HCT116 (cell line): ENCODE measurements at regions of chr1 and their contacts with region 1.

Region 1: GRCh38 chr1:61332196-61332753 is 249.9 kb downstream of the NFIA start:
- DNase-seq: no peak
- ATAC-seq: no peak
- H3K4me3 ChIP-seq: no peak overlapping the region
- H3K27ac ChIP-seq: no peak overlapping the region
- H3K4me1 ChIP-seq: peaks cover 1 to 4% of the 10 kb centered on the region in 2 experiments; a peak in 2 of 4 replicates
- H3K27me3 ChIP-seq: no peaks in the 10 kb centered on the region
- CTCF ChIP-seq: no peak
- POLR2A ChIP-seq: no peak
- RAD21 ChIP-seq: no peak

Region 2: GRCh38 chr1:60848583-60849188 is 483.6 kb before region 1 on chr1:
- CTCF ChIA-PET with region 1: no interaction called
- POLR2A ChIA-PET with region 1: no interaction called
- RAD21 ChIA-PET with region 1: no interaction called
- intact Hi-C with region 1: loop called (anchors 5 kb)
- DNase-seq: peak; percentile 54
- ATAC-seq: peak; percentile 69
- H3K4me3 ChIP-seq: no peak overlapping the region
- H3K27ac ChIP-seq: no peak overlapping the region
- H3K4me1 ChIP-seq: no peaks in the 10 kb centered on the region
- H3K27me3 ChIP-seq: no peaks in the 10 kb centered on the region
- CTCF ChIP-seq: peak; percentile 51 to 69 (median 60); a peak in 4 of 6 replicates
- POLR2A ChIP-seq: no peak
- RAD21 ChIP-seq: peak; percentile 74

Region 3: GRCh38 chr1:61379693-61380092 is 47.4 kb after region 1 on chr1:
- CTCF ChIA-PET with region 1: no interaction called
- POLR2A ChIA-PET with region 1: no interaction called
- RAD21 ChIA-PET with region 1: no interaction called
- intact Hi-C with region 1: no loop called
- DNase-seq: no peak
- ATAC-seq: no peak
- H3K4me3 ChIP-seq: no peak overlapping the region
- H3K27ac ChIP-seq: no peak overlapping the region
- H3K4me1 ChIP-seq: no peaks in the 10 kb centered on the region
- H3K27me3 ChIP-seq: no peaks in the 10 kb centered on the region
- CTCF ChIP-seq: no peak
- POLR2A ChIP-seq: no peak
- RAD21 ChIP-seq: no peak